Mucosa of descending colon (tissue), 3 donors: ENCODE measurements at regions of chr4 and their contacts with region 1.

Region 1: GRCh38 chr4:60209588-60209987 is 990.5 kb upstream of the ADGRL3 start:
- DNase-seq: no peak
- ATAC-seq: no peak
- H3K4me3 ChIP-seq: no peak overlapping the region
- H3K4me1 ChIP-seq: no peaks in the 10 kb centered on the region
- CTCF ChIP-seq: no peak

Region 2: GRCh38 chr4:60089546-60090273 is 119.9 kb before region 1 on chr4:
- intact Hi-C with region 1: no loop called
- DNase-seq: no peak
- ATAC-seq: no peak
- H3K4me3 ChIP-seq: no peak overlapping the region
- H3K4me1 ChIP-seq: no peaks in the 10 kb centered on the region
- CTCF ChIP-seq: no peak

Region 3: GRCh38 chr4:60506061-60506460 is 296.5 kb after region 1 on chr4:
- intact Hi-C with region 1: loop called in 1 of 2 experiments (anchors 5 kb)
- DNase-seq: no peak
- ATAC-seq: no peak
- H3K4me3 ChIP-seq: no peak overlapping the region
- H3K4me1 ChIP-seq: no peaks in the 10 kb centered on the region
- CTCF ChIP-seq: no peak